Naive thymus-derived CD4-positive, alpha-beta T cell (primary cell): ENCODE measurements at regions of chr5 and their contacts with region 1.

Region 1: DNA sequence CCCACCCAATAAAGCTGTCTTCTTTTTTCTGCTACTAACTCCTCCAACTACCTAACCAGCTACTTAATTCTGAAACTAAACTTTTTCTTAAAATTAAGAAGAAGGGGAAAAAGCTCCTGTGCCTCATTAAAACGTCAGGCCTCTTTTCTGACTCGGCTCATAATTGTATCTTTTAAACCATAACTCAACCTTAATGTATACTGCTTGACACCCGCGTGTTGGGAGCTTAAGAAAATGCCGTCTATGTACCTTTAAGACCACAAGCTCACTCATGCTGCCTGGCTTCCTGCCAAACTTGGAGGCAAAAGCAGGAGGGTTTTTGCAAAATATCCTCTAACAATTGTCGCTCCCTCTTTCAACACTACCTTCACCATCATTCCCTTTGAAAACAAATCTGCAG is 5.0 kb downstream of the EBF1 start:
- DNase-seq: peak in 7 of 9 donors; percentile 37 to 70 (median 62)
- ATAC-seq: no peak
- H3K4me3 ChIP-seq: no peak overlapping the region
- H3K4me3 Mint-ChIP-seq: peak overlapping the region in 8 of 10 donors; percentile 10 to 61 (median 43)
- H3K27ac ChIP-seq: no peak overlapping the region
- H3K27ac Mint-ChIP-seq: no peak overlapping the region
- H3K4me1 ChIP-seq: peaks cover 13 to 19% of the 10 kb centered on the region in 2 donors
- H3K4me1 Mint-ChIP-seq: peaks cover 18 to 41% (median 31%) of the 10 kb centered on the region in 7 donors
- H3K27me3 ChIP-seq: peaks cover 15 to 17% of the 10 kb centered on the region in 2 donors
- H3K27me3 Mint-ChIP-seq: peaks cover 35 to 73% (median 39%) of the 10 kb centered on the region in 5 donors

Region 2: GRCh38 chr5:159049844-159050315 is 44.9 kb before region 1 on chr5:
- CTCF ChIA-PET with region 1: no interaction called
- POLR2A ChIA-PET with region 1: no interaction called
- intact Hi-C with region 1: loop called in 1 of 2 experiments (anchors 5 kb)
- DNase-seq: no peak
- ATAC-seq: no peak
- H3K4me3 ChIP-seq: no peak overlapping the region
- H3K4me3 Mint-ChIP-seq: peak overlapping the region in 6 of 10 donors; percentile 15 to 72 (median 36)
- H3K27ac ChIP-seq: no peak overlapping the region
- H3K27ac Mint-ChIP-seq: no peak overlapping the region
- H3K4me1 ChIP-seq: peaks cover 0 to 3% of the 10 kb centered on the region in 2 donors
- H3K4me1 Mint-ChIP-seq: peaks cover 4 to 21% (median 11%) of the 10 kb centered on the region in 7 donors
- H3K27me3 ChIP-seq: no peaks in the 10 kb centered on the region
- H3K27me3 Mint-ChIP-seq: peaks cover 70 to 84% (median 79%) of the 10 kb centered on the region in 5 donors

Region 3: DNA sequence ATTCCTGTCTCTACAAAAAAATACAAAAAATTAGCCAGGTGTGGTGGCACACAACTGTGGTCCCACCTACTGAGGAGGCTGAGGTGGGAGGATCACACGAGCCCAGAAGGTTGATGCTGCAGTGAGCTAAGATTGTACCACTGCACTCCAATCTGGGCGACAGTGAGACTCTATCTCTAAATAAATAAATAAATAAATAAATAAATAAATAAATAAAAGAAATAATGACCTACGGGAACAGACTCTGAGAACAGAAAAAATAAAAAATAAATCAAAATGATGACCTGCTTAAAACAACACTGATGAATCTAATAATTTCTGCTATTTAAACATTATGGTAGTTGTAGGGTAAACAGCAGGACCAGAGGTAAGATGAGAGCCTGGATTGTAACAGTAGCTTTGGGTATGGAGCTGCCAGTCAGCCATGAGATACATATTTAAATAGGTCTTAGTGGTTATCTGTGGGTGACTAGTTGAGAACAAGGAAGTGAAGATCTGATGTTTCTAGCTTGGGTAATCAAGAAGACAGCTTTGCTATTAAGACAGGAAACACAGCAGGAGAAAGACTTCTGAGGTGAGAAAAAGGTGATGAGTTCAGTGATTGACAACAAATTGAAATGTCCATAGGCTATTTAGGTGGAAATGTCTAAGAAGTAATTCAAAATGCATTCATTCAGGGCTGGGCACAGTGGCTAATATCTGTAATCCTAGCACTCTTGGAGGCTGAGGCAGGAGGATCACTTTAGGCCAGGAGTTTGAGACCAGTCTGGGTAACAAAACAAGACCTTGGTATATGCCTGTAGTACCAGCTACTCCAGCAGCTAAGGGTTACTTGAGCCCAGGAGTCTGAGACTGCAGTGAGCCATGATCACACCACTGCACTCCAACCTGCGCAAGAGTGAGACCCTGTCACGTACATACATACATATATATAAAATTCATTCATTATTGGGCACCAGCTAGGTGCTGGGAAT is 103.6 kb after region 1 on chr5:
- CTCF ChIA-PET with region 1: no interaction called
- POLR2A ChIA-PET with region 1: no interaction called
- intact Hi-C with region 1: no loop called
- DNase-seq: peak in 3 of 9 donors; percentile 29 to 36 (median 31)
- ATAC-seq: peak; percentile 87
- H3K4me3 ChIP-seq: no peak overlapping the region
- H3K4me3 Mint-ChIP-seq: peak overlapping the region in 9 of 10 donors; percentile 3 to 63 (median 48)
- H3K27ac ChIP-seq: peak overlapping the region; percentile 9
- H3K27ac Mint-ChIP-seq: peak overlapping the region; percentile 0 to 83 (median 51)
- H3K4me1 ChIP-seq: peaks cover 23 to 37% of the 10 kb centered on the region in 2 donors
- H3K4me1 Mint-ChIP-seq: peaks cover 43 to 92% (median 86%) of the 10 kb centered on the region in 7 donors
- H3K27me3 ChIP-seq: no peaks in the 10 kb centered on the region
- H3K27me3 Mint-ChIP-seq: no peaks in the 10 kb centered on the region

Region 4: DNA sequence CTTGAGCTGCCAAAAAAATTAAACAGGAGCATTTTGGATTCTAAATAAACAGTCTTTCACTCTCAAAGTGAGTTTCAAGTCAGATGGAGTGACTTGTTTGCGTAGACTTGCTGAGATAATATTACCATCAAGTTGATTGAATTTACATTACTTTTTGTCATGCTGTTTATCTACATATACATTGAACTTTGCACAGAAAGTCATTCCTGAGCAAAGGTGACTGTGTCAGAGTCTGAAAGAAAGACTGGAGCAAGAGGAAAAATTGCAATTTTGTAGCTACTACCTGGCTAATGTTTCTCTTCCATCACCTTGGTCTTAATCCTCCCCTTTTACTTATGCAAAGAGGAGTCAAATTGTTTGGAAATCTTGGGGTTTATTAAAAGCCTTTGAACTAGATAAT is 1506.3 kb after region 1 on chr5:
- CTCF ChIA-PET with region 1: no interaction called
- POLR2A ChIA-PET with region 1: no interaction called
- intact Hi-C with region 1: no loop called
- DNase-seq: no peak
- ATAC-seq: no peak
- H3K4me3 ChIP-seq: no peak overlapping the region
- H3K4me3 Mint-ChIP-seq: no peak overlapping the region
- H3K27ac ChIP-seq: no peak overlapping the region
- H3K27ac Mint-ChIP-seq: no peak overlapping the region
- H3K4me1 ChIP-seq: no peaks in the 10 kb centered on the region
- H3K4me1 Mint-ChIP-seq: no peaks in the 10 kb centered on the region
- H3K27me3 ChIP-seq: no peaks in the 10 kb centered on the region
- H3K27me3 Mint-ChIP-seq: no peaks in the 10 kb centered on the region